Activated CD4-positive, alpha-beta memory T cell treated with anti-CD3 and anti-CD28 coated beads, Interleukin-2, amount 10 ng/mL, durations not matched to agents 7 days and 5 days (primary cell): ENCODE measurements at regions of chr17 and their contacts with region 1.

Region 1: GRCh38 chr17:6843241-6843880 is 11.8 kb upstream of the TEKT1 start:
- DNase-seq: no peak
- H3K4me3 Mint-ChIP-seq: no peak overlapping the region
- H3K27ac Mint-ChIP-seq: no peak overlapping the region
- H3K4me1 Mint-ChIP-seq: peaks cover 18% of the 10 kb centered on the region
- H3K27me3 Mint-ChIP-seq: peaks cover 61% of the 10 kb centered on the region

Region 2: GRCh38 chr17:6666077-6666521 is 177.3 kb before region 1 on chr17:
- CTCF ChIA-PET with region 1: interaction called, 17 read pairs
- POLR2A ChIA-PET with region 1: no interaction called
- DNase-seq: peak; percentile 58
- H3K4me3 Mint-ChIP-seq: no peak overlapping the region
- H3K27ac Mint-ChIP-seq: no peak overlapping the region
- H3K4me1 Mint-ChIP-seq: peaks cover 14% of the 10 kb centered on the region
- H3K27me3 Mint-ChIP-seq: no peaks in the 10 kb centered on the region

Region 3: GRCh38 chr17:6831661-6832263 is 11.6 kb before region 1 on chr17 and contains the start of gene TEKT1:
- CTCF ChIA-PET with region 1: interaction called, 10 read pairs
- POLR2A ChIA-PET with region 1: no interaction called
- DNase-seq: peak; percentile 70
- H3K4me3 Mint-ChIP-seq: peak within 1 kb of the TSS; percentile 45
- H3K27ac Mint-ChIP-seq: no peak within 1 kb of the TSS
- H3K4me1 Mint-ChIP-seq: peaks cover 5% of the 10 kb centered on the region
- H3K27me3 Mint-ChIP-seq: peaks cover 61% of the 10 kb centered on the region
- total RNA-seq, gene TEKT1: not detected

Region 4: GRCh38 chr17:6853764-6854442 is 10.5 kb after region 1 on chr17:
- CTCF ChIA-PET with region 1: interaction called, 18 read pairs
- POLR2A ChIA-PET with region 1: no interaction called
- DNase-seq: no peak
- H3K4me3 Mint-ChIP-seq: no peak overlapping the region
- H3K27ac Mint-ChIP-seq: no peak overlapping the region
- H3K4me1 Mint-ChIP-seq: no peaks in the 10 kb centered on the region
- H3K27me3 Mint-ChIP-seq: peaks cover 47% of the 10 kb centered on the region

Region 5: DNA sequence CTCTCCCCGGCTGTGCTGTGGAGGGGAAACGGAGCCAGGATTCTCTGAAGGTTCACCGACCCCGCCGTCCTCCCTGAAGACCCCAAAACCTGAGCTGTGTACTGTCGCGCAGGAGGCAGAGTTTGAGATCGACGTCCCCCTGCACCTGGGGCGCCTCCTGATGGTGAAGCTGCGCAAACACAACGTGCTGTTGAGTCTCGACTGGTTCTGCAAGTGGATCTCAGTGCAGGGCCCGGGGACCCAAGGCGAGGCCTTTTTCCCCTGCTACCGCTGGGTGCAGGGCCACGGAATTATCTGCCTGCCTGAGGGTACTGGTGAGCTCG is 50.8 kb after region 1 on chr17:
- CTCF ChIA-PET with region 1: interaction called, 22 read pairs
- POLR2A ChIA-PET with region 1: no interaction called
- DNase-seq: peak; percentile 35
- H3K4me3 Mint-ChIP-seq: no peak overlapping the region
- H3K27ac Mint-ChIP-seq: no peak overlapping the region
- H3K4me1 Mint-ChIP-seq: no peaks in the 10 kb centered on the region
- H3K27me3 Mint-ChIP-seq: peaks cover 70% of the 10 kb centered on the region

Region 6: GRCh38 chr17:6927290-6928126 is 84.1 kb after region 1 on chr17:
- CTCF ChIA-PET with region 1: no interaction called
- POLR2A ChIA-PET with region 1: no interaction called
- DNase-seq: no peak
- H3K4me3 Mint-ChIP-seq: no peak overlapping the region
- H3K27ac Mint-ChIP-seq: no peak overlapping the region
- H3K4me1 Mint-ChIP-seq: peaks cover 6% of the 10 kb centered on the region
- H3K27me3 Mint-ChIP-seq: peaks cover 23% of the 10 kb centered on the region

Region 7: GRCh38 chr17:7004398-7005253 is 161.3 kb after region 1 on chr17:
- CTCF ChIA-PET with region 1: interaction called, 34 read pairs
- POLR2A ChIA-PET with region 1: no interaction called
- DNase-seq: peak; percentile 36
- H3K4me3 Mint-ChIP-seq: no peak overlapping the region
- H3K27ac Mint-ChIP-seq: peak overlapping the region; percentile 31
- H3K4me1 Mint-ChIP-seq: peaks cover 27% of the 10 kb centered on the region
- H3K27me3 Mint-ChIP-seq: no peaks in the 10 kb centered on the region